ENCODE measurements at regions of chr22 and their contacts with region 1.

Region 1: GRCh38 chr22:30591588-30592359 is at the start of gene PES1:
- DNase-seq: peak; percentile 96
- H3K4me3 Mint-ChIP-seq: no peak within 1 kb of the TSS
- H3K27ac Mint-ChIP-seq: no peak within 1 kb of the TSS
- H3K4me1 Mint-ChIP-seq: peaks cover 11% of the 10 kb centered on the region
- H3K27me3 Mint-ChIP-seq: no peaks in the 10 kb centered on the region
- total RNA-seq, gene PES1: 92.8 to 96.7 TPM

Region 2: GRCh38 chr22:30262917-30263741 is 328.6 kb before region 1 on chr22:
- CTCF ChIA-PET with region 1: no interaction called
- intact Hi-C with region 1: loop called (anchors 5 kb)
- DNase-seq: peak; percentile 87
- H3K4me3 Mint-ChIP-seq: peak overlapping the region; percentile 65
- H3K27ac Mint-ChIP-seq: peak overlapping the region; percentile 43
- H3K4me1 Mint-ChIP-seq: peaks cover 39% of the 10 kb centered on the region
- H3K27me3 Mint-ChIP-seq: no peaks in the 10 kb centered on the region

Region 3: GRCh38 chr22:30356449-30357235 is 235.1 kb before region 1 on chr22 and contains the starts of genes CCDC157 and SF3A1:
- CTCF ChIA-PET with region 1: no interaction called
- intact Hi-C with region 1: loop called (anchors 5 kb)
- DNase-seq: peak; percentile 87
- H3K4me3 Mint-ChIP-seq: peak within 1 kb of the TSS; percentile 92
- H3K27ac Mint-ChIP-seq: peak within 1 kb of the TSS; percentile 84
- H3K4me1 Mint-ChIP-seq: peaks cover 50% of the 10 kb centered on the region
- H3K27me3 Mint-ChIP-seq: no peaks in the 10 kb centered on the region
- total RNA-seq, gene CCDC157: 1.1 to 1.5 TPM
- total RNA-seq, gene SF3A1: 274 to 276 TPM

Region 4: DNA sequence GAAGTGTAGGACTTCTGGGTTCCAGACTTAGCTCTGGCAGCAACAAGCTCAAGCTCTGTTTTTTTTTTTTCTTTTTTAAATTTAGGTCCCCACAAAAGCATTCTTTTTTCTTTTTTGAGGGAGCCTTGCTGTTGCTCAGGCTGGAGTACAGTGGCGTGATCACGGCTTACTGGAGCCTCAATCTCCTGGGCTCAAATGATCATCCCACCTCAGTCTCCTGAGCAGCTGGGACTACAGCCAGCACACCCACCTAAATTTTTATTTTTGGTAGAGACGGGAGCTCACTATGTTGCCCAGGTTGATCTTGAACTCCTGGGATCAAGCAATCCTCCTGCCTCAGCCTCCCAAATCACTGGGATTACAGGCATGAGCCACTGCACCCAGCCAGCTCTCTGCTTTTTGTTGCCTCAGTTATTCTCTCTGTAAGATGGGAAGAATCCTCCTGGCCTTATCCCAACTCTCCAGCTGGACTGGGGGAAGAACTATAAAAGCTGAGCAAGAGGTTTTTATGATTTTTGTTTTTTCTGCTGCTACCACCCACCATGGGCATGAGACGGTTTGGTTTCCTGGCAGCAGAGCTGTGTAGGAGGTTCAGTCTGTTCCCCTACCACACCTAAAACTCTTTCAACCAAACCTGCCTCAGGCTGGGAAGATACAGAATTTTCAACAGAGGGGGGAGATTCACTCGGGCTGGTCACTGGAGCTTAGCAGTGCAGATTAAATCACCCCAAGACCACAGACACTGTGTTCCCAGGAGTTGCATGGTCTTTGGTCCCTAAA is 177.8 kb before region 1 on chr22:
- CTCF ChIA-PET with region 1: no interaction called
- intact Hi-C with region 1: no loop called
- DNase-seq: peak; percentile 25
- H3K4me3 Mint-ChIP-seq: no peak overlapping the region
- H3K27ac Mint-ChIP-seq: peak overlapping the region; percentile 81
- H3K4me1 Mint-ChIP-seq: peaks cover 37% of the 10 kb centered on the region
- H3K27me3 Mint-ChIP-seq: no peaks in the 10 kb centered on the region

Region 5: GRCh38 chr22:30423982-30424963 is 167.5 kb before region 1 on chr22:
- CTCF ChIA-PET with region 1: no interaction called
- intact Hi-C with region 1: loop called (anchors 1 kb)
- DNase-seq: peak; percentile 99
- H3K4me3 Mint-ChIP-seq: peak overlapping the region; percentile 97
- H3K27ac Mint-ChIP-seq: peak overlapping the region; percentile 96
- H3K4me1 Mint-ChIP-seq: peaks cover 50% of the 10 kb centered on the region
- H3K27me3 Mint-ChIP-seq: no peaks in the 10 kb centered on the region

Region 6: GRCh38 chr22:30435674-30436126 is 156.1 kb before region 1 on chr22:
- CTCF ChIA-PET with region 1: no interaction called
- intact Hi-C with region 1: loop called (anchors 5 kb)
- DNase-seq: peak; percentile 90
- H3K4me3 Mint-ChIP-seq: peak overlapping the region; percentile 84
- H3K27ac Mint-ChIP-seq: peak overlapping the region; percentile 95
- H3K4me1 Mint-ChIP-seq: peaks cover 22% of the 10 kb centered on the region
- H3K27me3 Mint-ChIP-seq: peaks cover 12% of the 10 kb centered on the region

Region 7: GRCh38 chr22:30556388-30556787 is 35.4 kb before region 1 on chr22:
- CTCF ChIA-PET with region 1: no interaction called
- intact Hi-C with region 1: no loop called
- DNase-seq: no peak
- H3K4me3 Mint-ChIP-seq: no peak overlapping the region
- H3K27ac Mint-ChIP-seq: no peak overlapping the region
- H3K4me1 Mint-ChIP-seq: no peaks in the 10 kb centered on the region
- H3K27me3 Mint-ChIP-seq: no peaks in the 10 kb centered on the region

Region 8: DNA sequence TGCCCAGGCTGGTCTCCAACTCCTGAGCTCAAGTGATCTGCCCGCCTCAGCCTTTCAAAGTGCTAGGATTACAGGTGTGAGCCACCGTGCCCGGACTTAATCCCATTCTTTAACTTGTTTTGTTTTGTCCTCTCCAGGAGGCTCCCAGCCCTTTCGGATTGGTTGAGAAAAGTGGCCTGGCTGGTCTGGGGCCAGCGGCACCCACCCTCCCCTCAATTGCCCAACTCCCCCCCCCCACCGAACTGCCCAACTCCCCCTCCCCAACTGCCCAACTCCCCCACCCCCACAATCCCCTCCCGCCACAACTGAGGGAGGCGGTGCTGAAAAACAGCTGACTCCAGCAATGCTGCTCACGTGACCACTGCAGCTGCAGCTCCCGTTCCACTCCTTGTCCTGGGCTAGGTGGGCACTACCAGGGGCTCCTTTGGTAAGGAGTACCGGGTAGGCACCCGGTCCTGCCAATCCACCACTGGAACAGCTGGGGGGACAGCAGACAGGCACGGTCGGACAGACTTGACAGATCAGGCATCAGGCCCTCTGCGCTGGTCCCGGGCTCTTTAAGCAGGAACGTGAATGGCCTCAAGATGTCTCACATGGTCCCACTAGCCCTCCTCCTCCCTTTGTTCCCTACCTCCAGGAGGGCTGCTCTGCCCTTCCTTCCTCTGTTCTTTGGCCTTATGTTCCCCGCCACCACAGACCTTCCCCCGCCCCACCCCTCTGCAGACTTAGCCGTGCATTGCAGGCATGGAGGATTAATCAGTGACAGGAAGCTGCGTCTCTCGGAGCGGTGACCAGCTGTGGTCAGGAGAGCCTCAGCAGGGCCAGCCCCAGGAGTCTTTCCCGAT is 14.9 kb after region 1 on chr22 and contains the start of gene TCN2:
- CTCF ChIA-PET with region 1: interaction called, 7 read pairs
- intact Hi-C with region 1: loop called (anchors 2 kb)
- DNase-seq: peak; percentile 78
- H3K4me3 Mint-ChIP-seq: peak within 1 kb of the TSS; percentile 74
- H3K27ac Mint-ChIP-seq: no peak within 1 kb of the TSS
- H3K4me1 Mint-ChIP-seq: peaks cover 33% of the 10 kb centered on the region
- H3K27me3 Mint-ChIP-seq: no peaks in the 10 kb centered on the region
- total RNA-seq, gene TCN2: 0.19 to 0.22 TPM

Region 9: GRCh38 chr22:30968924-30969539 is 377.3 kb after region 1 on chr22 and contains the start of gene TUG1:
- CTCF ChIA-PET with region 1: no interaction called
- intact Hi-C with region 1: loop called (anchors 1 kb)
- DNase-seq: peak; percentile 98
- H3K4me3 Mint-ChIP-seq: peak within 1 kb of the TSS; percentile 93
- H3K27ac Mint-ChIP-seq: peak within 1 kb of the TSS; percentile 89
- H3K4me1 Mint-ChIP-seq: peaks cover 56% of the 10 kb centered on the region
- H3K27me3 Mint-ChIP-seq: no peaks in the 10 kb centered on the region
- total RNA-seq, gene TUG1: 42.3 to 44.0 TPM

Measured in activated naive CD4-positive, alpha-beta T cell treated with anti-CD3 and anti-CD28 coated beads for 36 hours (primary cell).